Activated CD4-positive, alpha-beta T cell treated with anti-CD3 and anti-CD28 coated beads for 36 hours (primary cell): ENCODE measurements at regions of chr3 and their contacts with region 1.

Region 1: DNA sequence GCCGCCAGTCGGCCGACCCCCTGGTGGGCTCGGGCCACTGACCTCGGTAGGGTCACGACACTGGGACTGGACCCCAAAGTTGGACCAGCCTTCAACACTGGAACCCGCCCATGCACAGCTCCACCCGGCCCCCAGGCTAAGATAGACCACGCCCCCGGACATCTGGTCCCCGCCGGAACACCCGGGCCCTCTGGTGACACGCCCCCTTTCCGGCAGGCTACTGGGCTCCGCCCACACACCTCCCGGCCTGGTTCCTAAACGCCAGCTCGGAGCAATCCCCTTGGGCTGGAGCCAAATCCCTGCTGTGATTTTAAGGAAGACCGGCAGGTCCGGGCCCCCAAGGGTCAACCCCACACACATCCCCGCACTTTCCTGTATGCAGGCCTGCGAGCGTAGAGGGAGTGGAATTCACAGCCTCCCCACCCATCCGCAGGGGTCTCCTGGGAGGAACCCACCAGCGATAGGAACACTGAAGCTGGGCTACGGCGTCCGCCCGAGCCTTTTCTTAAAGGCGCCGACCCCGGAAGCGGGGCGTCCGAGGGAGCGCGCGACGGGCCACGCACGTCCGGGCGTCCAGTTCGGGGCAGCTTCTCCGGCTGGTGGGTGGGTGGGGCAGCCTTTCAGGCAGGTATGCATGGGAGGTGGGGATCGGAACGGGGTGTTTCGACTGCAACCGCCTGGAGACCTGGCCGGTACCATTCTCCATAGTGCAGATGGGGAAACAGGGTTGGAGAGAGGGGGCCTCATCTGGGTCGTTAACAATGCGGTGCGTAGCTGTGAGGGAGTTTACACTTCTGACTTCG is at the start of gene HEMK1:
- DNase-seq: peak; percentile 98
- ATAC-seq: peak; percentile 33
- H3K4me3 Mint-ChIP-seq: peak within 1 kb of the TSS; percentile 100
- H3K27ac Mint-ChIP-seq: peak within 1 kb of the TSS; percentile 99
- H3K4me1 Mint-ChIP-seq: peaks cover 59% of the 10 kb centered on the region
- H3K27me3 Mint-ChIP-seq: no peaks in the 10 kb centered on the region
- total RNA-seq, gene HEMK1: 61.6 to 77.7 TPM

Region 2: GRCh38 chr3:50298836-50299637 is 270.1 kb before region 1 on chr3 and contains the starts of genes HYAL3 and NAA80:
- CTCF ChIA-PET with region 1: no interaction called
- POLR2A ChIA-PET with region 1: interaction called, 3 read pairs
- intact Hi-C with region 1: loop called in 1 of 2 experiments (anchors 1 kb)
- DNase-seq: peak; percentile 100
- ATAC-seq: peak; percentile 89
- H3K4me3 Mint-ChIP-seq: peak within 1 kb of the TSS; percentile 97
- H3K27ac Mint-ChIP-seq: peak within 1 kb of the TSS; percentile 96
- H3K4me1 Mint-ChIP-seq: peaks cover 13% of the 10 kb centered on the region
- H3K27me3 Mint-ChIP-seq: no peaks in the 10 kb centered on the region
- total RNA-seq, gene HYAL3: 4.5 to 5.4 TPM
- total RNA-seq, gene NAA80: 17.6 to 18.7 TPM

Region 3: DNA sequence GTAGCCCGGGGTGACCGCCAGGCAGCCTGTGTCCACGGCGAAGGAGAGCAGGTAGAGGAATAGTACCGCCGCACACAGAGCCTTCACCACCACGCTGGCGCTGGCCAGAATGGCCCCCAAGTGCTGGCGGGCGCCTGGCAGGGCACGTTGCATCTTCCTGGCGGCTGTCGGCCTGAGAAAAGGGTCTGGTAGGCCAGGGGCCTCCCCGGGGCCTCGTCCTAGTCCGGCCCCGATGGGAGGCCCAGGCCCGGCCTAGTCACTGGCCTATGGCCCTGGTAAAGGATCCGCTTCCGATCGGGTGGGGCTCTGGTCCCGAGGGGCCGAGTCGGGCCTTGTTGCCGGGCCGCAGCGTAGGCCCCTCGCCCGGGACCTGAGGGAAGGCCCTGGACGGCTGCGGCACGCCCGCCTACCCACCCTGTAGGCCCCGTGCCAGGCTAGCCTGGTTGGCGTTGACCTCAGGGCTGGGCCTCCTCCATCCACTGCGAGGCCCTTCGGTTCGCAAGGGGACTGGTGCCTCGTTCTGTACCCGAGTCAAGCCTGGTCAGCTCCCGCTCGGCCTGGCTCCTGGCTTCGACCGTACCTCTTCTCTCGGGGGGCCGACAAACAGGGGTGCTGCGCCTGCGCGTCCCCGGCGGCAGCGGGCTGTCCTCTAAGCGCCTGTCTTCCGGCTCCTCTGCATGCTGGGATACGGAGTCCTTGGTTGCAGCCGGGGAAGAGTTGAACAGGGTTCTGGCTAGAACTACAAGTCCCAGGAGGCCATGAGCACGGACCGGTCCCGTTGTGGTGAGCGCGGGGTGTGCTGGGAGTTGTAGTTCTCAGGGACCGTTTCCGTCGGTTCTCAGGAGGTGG is 210.0 kb before region 1 on chr3 and contains the start of gene TMEM115:
- CTCF ChIA-PET with region 1: interaction called, 3 read pairs
- POLR2A ChIA-PET with region 1: no interaction called
- intact Hi-C with region 1: loop called (anchors 1 to 5 kb)
- DNase-seq: peak; percentile 97
- ATAC-seq: peak; percentile 100
- H3K4me3 Mint-ChIP-seq: peak within 1 kb of the TSS; percentile 91
- H3K27ac Mint-ChIP-seq: peak within 1 kb of the TSS; percentile 94
- H3K4me1 Mint-ChIP-seq: peaks cover 37% of the 10 kb centered on the region
- H3K27me3 Mint-ChIP-seq: no peaks in the 10 kb centered on the region
- total RNA-seq, gene TMEM115: 13.1 to 16.1 TPM

Region 4: DNA sequence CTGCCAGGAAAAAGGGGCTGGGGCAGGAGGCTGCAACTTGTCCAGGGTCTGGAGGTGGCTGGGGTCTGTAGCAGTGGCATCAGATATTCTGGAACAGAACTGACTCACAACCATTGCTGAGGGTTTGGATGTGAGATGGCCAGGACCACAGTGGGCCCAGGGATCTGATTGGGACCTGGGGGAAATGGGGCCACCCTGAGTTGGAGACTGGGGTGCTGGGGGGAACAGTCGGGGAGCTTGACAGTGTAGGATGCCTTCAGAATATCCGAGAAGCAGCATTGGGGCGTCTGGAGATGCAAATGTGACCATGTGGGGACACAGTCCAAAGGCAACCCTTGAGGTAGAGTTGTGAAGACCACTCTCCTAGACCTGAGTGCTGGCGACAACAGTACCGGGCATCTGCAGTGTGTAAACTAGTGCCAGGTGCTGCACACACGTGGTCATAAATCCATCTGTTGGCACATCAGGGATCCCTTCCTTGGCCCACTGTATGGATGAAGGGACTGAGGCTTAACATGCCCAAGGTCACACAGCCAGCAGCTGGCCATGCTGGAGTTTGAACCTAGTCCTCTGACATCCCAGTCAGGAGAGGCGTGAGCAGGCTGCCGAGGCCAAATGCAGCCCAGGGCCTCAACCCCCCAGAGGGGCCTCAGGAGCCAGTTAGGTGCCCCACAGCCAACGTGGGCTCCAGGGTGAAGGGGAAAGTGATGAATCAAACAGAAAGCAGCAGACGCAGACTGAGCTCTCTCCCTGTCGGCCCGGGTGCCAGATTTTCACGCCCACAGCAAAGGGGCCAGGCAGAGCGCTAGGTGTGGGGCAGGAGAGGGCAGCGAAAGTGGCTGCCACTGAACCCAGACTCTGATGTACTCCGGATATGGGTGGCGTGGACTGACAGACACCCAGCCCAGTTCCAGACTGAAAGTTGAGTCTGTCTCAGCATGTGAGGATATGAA is 18.9 kb after region 1 on chr3:
- CTCF ChIA-PET with region 1: interaction called, 185 read pairs
- POLR2A ChIA-PET with region 1: interaction called, 258 read pairs
- intact Hi-C with region 1: loop called (anchors 1 kb)
- DNase-seq: peak; percentile 94
- ATAC-seq: peak; percentile 49
- H3K4me3 Mint-ChIP-seq: peak overlapping the region; percentile 42
- H3K27ac Mint-ChIP-seq: peak overlapping the region; percentile 100
- H3K4me1 Mint-ChIP-seq: peaks cover 95% of the 10 kb centered on the region
- H3K27me3 Mint-ChIP-seq: no peaks in the 10 kb centered on the region

Region 5: DNA sequence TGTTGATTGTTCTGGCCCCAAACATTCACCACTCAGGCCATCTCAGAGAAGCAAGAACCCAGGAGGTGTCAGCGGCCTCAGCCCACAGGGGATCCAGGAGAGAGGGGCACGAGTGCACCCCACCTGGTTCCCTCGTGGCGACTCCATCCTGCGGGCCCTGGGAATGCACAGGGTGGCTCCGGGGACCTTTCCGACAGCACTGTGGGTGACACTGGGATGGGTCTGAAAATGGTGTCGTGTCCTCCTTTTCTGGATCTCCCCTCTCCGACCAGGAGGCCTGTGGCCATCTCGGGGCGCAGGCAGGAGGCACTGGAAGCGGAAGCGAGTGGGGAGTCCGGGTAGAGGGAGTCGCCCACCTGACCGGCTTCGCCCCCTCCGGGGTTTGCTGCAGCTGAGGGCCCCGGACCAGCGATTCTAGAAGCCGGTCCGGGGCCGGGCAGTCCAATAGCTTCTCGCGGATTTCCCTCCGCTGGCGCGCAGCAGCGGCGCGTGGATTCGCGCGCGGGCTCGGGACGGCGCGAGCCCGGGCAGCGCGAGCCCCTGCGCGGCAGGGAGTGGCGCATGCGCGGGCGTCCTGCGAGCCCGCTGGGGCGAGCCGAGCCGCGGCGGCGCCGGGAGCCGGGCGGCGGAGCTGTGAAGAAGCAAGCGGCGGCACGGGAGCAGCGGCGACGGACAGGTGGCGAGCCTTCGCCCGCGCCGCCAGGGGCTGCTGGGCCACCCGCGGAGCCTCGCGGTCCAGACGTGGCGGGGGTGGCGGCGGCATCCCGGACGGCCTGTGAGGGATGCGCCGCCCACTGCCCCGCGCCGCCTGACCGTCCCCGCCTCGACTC is 105.4 kb after region 1 on chr3 and contains the start of gene DOCK3:
- CTCF ChIA-PET with region 1: interaction called, 3 read pairs
- POLR2A ChIA-PET with region 1: no interaction called
- intact Hi-C with region 1: loop called in 1 of 2 experiments (anchors 2 kb)
- DNase-seq: peak; percentile 79
- ATAC-seq: peak; percentile 91
- H3K4me3 Mint-ChIP-seq: peak within 1 kb of the TSS; percentile 69
- H3K27ac Mint-ChIP-seq: peak within 1 kb of the TSS; percentile 55
- H3K4me1 Mint-ChIP-seq: peaks cover 10% of the 10 kb centered on the region
- H3K27me3 Mint-ChIP-seq: peaks cover 36% of the 10 kb centered on the region
- total RNA-seq, gene DOCK3: 2.5 to 2.6 TPM

Region 6: DNA sequence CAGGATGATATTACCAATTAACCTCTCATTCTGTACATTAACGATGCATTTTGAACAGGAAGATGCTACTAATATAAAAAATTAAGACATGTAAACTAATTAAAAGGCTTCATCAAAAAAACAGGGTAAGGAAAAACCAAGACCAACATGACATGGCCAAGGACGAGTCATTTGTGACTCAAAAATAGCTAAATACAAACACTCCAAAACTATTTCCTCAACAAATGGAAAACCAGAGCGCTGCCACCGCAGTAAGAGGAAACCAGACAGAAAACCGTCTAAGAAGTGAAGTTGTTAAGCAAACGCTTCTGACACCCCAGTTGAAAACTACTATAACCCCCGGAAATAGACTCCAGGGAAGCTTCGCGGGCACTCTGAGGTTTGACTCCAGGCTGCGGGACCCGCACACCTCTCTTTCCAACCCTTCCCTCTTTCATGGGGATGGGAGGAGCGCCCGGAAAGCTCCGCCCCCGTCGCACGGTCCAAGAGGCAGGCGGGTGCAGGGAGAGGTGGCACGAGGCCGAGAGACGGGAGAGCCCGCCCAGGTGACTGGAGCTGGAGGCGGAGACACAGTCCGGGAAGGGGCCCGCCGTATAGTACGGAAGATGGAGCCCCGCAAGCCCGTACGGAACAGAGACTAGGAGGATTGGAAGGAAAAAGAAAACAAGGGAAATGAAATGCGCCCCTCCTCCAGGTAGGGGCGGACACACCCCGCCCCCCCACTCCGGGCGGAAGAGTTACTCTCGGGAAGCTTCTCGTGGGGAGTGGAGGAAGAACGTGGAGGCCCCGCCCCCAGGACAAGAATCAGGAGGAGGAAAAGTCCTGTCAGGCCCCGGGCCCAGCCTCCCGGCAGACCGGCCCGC is 930.0 kb after region 1 on chr3:
- CTCF ChIA-PET with region 1: no interaction called
- POLR2A ChIA-PET with region 1: no interaction called
- intact Hi-C with region 1: loop called in 1 of 2 experiments (anchors 1 kb)
- DNase-seq: peak; percentile 94
- ATAC-seq: peak; percentile 75
- H3K4me3 Mint-ChIP-seq: peak overlapping the region; percentile 88
- H3K27ac Mint-ChIP-seq: peak overlapping the region; percentile 97
- H3K4me1 Mint-ChIP-seq: peaks cover 16% of the 10 kb centered on the region
- H3K27me3 Mint-ChIP-seq: no peaks in the 10 kb centered on the region